ENCODE measurements at regions of chr9 and their contacts with region 1.

Region 1: GRCh38 chr9:88065601-88066000 is 72.7 kb downstream of the SPATA31C2 start:
- DNase-seq: no peak
- ATAC-seq: no peak

Region 2: GRCh38 chr9:88084357-88085183 is 19.0 kb after region 1 on chr9:
- intact Hi-C with region 1: loop called (anchors 1 kb)
- DNase-seq: no peak
- ATAC-seq: no peak

Region 3: DNA sequence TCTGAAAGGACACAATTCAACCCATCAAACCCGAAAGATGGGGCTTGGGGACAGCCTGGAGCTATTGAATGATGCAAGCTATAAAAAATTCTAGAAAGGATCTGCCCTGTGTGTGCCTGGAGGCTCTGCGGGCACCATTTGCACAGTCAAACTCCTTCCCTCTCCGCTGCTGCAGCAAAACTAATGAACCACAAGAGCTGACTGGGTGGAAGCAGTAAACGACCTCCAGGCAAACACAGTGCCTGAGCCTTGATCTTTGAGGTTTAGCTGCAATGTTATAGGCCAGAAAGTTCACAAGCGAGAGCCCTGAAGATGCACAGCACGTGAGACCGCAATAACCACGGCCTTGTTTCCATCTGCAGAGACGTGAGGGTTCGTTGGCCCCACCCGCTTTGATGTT is 856.4 kb after region 1 on chr9:
- intact Hi-C with region 1: no loop called
- DNase-seq: no peak
- ATAC-seq: no peak

Measured in sciatic nerve (tissue), 2 donors.